CD4-positive, alpha-beta memory T cell (primary cell): ENCODE measurements at regions of chr6 and their contacts with region 1.

Region 1: DNA sequence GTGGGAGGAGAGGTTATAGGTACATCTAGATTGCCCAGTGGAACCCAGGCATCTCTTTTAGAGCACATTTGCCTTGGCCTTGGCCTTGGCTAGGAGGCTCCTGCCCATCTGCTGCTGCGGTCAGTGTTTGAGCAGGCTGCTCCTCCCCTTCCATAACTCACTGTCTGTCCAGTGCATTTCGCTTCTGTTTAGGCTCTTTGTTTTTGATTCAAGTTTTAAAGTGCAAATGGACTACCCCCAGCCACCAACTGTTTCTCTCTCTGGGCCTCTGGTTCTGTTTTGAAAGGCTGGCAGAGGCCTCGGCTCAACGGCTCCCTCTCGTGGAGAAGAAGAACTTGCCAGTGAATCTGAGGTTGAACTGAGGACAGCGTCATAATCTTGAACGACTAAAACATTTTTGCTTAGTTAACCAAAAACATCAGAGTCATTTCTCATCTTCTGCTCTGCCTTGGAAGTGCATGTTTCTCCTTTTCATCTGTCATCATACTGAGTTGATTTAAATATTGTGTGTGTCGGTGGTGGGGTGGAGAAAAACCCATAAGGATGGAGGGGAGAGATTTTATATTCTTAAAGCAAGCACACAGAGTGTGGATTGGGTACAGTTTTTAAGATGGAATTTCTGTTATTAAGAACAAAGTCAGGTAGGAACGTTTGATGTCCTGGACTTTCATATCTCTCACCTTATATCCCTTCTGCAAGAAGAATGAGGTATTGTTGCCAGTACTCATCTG is 171.4 kb downstream of the DTNBP1 start:
- DNase-seq: peak; percentile 61 to 64 (median 63)
- H3K4me3 ChIP-seq: no peak overlapping the region
- H3K4me3 Mint-ChIP-seq: no peak overlapping the region
- H3K27ac ChIP-seq: no peak overlapping the region
- H3K27ac Mint-ChIP-seq: peak overlapping the region in 6 of 7 donors; percentile 10 to 61 (median 48)
- H3K4me1 ChIP-seq: peaks cover 7% of the 10 kb centered on the region
- H3K4me1 Mint-ChIP-seq: peaks cover 22 to 32% (median 24%) of the 10 kb centered on the region in 4 donors
- H3K27me3 ChIP-seq: no peaks in the 10 kb centered on the region
- H3K27me3 Mint-ChIP-seq: no peaks in the 10 kb centered on the region

Region 2: GRCh38 chr6:14711056-14711703 is 780.2 kb before region 1 on chr6:
- CTCF ChIA-PET with region 1: no interaction called
- POLR2A ChIA-PET with region 1: no interaction called
- intact Hi-C with region 1: loop called (anchors 5 kb)
- DNase-seq: peak in 4 of 5 donors; percentile 30 to 54 (median 40)
- H3K4me3 ChIP-seq: no peak overlapping the region
- H3K4me3 Mint-ChIP-seq: no peak overlapping the region
- H3K27ac ChIP-seq: no peak overlapping the region
- H3K27ac Mint-ChIP-seq: peak overlapping the region in 3 of 7 donors; percentile 4 to 86 (median 57)
- H3K4me1 ChIP-seq: peaks cover 12% of the 10 kb centered on the region
- H3K4me1 Mint-ChIP-seq: peaks cover 4 to 19% (median 9%) of the 10 kb centered on the region in 4 donors
- H3K27me3 ChIP-seq: no peaks in the 10 kb centered on the region
- H3K27me3 Mint-ChIP-seq: peaks cover 0 to 2% of the 10 kb centered on the region in 2 donors